ENCODE measurements at regions of chr21 and their contacts with region 1.

Region 1: DNA sequence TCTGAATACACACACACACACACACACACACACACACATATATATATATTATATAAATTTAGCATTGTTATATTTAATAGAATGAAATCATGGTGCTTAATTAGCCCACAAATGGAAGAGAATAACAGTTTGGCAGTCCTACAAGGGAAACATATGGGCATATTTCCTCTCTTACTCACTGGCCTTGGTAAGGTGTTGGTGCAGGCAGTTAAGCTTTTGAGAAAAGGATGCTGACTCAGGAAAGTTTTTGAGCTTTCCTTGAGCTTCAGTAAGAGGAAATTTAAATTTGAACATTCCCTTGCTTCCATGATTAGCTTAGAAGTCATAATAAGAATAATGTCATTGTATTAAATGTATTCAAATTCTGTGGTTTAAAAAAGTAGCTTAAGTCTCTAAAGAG is 37.0 kb upstream of the B3GALT5 start:
- DNase-seq: peak; percentile 45
- H3K4me3 ChIP-seq: no peak overlapping the region
- CTCF ChIP-seq: no peak

Region 2: DNA sequence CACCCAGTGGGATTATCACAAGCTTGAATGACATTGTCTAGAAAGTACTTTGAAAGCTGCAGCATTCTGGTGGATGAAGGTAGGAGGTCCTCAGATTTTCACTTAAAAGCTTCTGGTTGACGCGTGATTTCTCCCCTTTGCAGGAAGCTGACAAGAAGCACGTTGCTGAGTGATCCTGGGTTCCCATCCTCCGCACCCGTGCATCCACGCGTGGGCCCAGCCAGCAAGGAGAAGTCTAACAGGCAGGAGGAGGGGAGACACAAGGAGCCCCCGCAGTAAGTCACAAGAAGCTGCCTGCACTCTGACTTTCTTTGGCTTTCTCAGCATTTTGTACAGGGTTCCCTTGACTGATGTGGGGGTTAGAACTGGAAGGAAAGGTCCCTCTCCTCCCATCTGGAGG is 29.2 kb after region 1 on chr21:
- in situ Hi-C with region 1: loop called (anchors 5 kb)
- DNase-seq: no peak
- H3K4me3 ChIP-seq: no peak overlapping the region
- CTCF ChIP-seq: no peak